H1 (cell line): ENCODE measurements at regions of chr11 and their contacts with region 1.

Region 1: GRCh38 chr11:13343931-13344717 is 66.5 kb downstream of the BMAL1 start:
- DNase-seq: peak in 1 of 2 experiments; percentile 82
- H3K4me3 ChIP-seq: no peak overlapping the region
- H3K27ac ChIP-seq: no peak overlapping the region
- H3K4me1 ChIP-seq: peaks cover 0 to 2% (median 0%) of the 10 kb centered on the region in 4 experiments; a peak in 1 of 7 replicates
- H3K27me3 ChIP-seq: no peaks in the 10 kb centered on the region
- CTCF ChIP-seq: peak; percentile 29 to 85 (median 78)
- EP300 ChIP-seq: no peak
- POLR2A ChIP-seq: no peak
- RAD21 ChIP-seq: peak; percentile 79 to 83

Region 2: DNA sequence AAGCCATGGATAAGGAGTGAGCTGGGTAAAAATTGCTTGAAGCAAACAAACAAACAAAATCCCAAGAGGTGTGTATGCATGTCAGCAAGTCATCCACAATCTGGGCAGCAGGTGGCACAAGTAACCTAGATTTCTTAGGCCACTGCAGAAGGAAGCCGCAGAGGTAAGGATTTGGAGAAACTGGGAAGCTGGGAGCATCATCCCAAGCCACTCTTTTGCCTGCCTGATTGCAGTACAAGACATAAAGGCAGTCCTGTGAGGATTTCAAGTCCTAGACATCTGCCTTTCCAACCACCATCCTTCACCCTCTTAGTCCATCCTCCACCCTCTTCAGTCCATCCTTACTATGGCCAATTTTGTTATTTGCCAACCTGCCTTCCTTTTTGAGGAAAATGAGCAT is 133.7 kb before region 1 on chr11:
- CTCF ChIA-PET with region 1: interaction called, 98 read pairs
- POLR2A ChIA-PET with region 1: interaction called, 4 read pairs
- DNase-seq: peak; percentile 53 to 67
- H3K4me3 ChIP-seq: no peak overlapping the region
- H3K27ac ChIP-seq: no peak overlapping the region
- H3K4me1 ChIP-seq: peaks cover 2 to 10% (median 6%) of the 10 kb centered on the region in 4 experiments; a peak in 6 of 7 replicates
- H3K27me3 ChIP-seq: peaks cover 0 to 1% (median 0%) of the 10 kb centered on the region in 4 experiments; a peak in 1 of 7 replicates
- CTCF ChIP-seq: peak; percentile 29 to 91 (median 87)
- EP300 ChIP-seq: no peak
- POLR2A ChIP-seq: no peak
- RAD21 ChIP-seq: peak; percentile 93 to 97

Region 3: GRCh38 chr11:13229711-13230318 is 114.3 kb before region 1 on chr11:
- CTCF ChIA-PET with region 1: interaction called, 12 read pairs
- POLR2A ChIA-PET with region 1: no interaction called
- DNase-seq: no peak
- H3K4me3 ChIP-seq: no peak overlapping the region
- H3K27ac ChIP-seq: no peak overlapping the region
- H3K4me1 ChIP-seq: no peaks in the 10 kb centered on the region
- H3K27me3 ChIP-seq: no peaks in the 10 kb centered on the region
- CTCF ChIP-seq: no peak
- EP300 ChIP-seq: no peak
- POLR2A ChIP-seq: no peak
- RAD21 ChIP-seq: no peak

Region 4: DNA sequence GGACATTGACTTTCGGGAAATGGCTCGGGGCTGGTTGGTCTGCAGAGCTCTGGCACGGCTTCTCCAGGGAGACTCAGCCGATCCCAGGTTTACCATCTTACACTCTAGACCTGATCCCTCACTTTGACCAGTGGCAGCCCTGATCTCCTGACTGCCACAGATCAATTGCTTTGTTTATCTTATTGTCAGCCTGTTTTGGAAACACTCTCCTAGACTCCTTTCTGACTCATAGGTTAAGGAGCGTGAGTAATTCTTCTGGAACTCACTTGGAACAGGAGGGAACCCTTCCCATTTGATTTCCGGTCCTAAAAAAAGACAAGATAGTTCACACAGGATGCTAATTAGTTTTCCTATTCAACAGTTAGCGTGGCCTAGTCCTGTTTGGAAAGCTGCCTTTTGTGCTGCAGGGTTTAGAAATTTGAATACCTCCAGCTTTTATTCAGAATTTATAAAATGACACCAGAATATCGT is 82.5 kb before region 1 on chr11:
- CTCF ChIA-PET with region 1: interaction called, 14 read pairs
- POLR2A ChIA-PET with region 1: no interaction called
- DNase-seq: no peak
- H3K4me3 ChIP-seq: no peak overlapping the region
- H3K27ac ChIP-seq: no peak overlapping the region
- H3K4me1 ChIP-seq: peaks cover 3 to 17% (median 9%) of the 10 kb centered on the region in 4 experiments
- H3K27me3 ChIP-seq: no peaks in the 10 kb centered on the region
- CTCF ChIP-seq: no peak
- EP300 ChIP-seq: no peak
- POLR2A ChIP-seq: no peak
- RAD21 ChIP-seq: no peak

Region 5: DNA sequence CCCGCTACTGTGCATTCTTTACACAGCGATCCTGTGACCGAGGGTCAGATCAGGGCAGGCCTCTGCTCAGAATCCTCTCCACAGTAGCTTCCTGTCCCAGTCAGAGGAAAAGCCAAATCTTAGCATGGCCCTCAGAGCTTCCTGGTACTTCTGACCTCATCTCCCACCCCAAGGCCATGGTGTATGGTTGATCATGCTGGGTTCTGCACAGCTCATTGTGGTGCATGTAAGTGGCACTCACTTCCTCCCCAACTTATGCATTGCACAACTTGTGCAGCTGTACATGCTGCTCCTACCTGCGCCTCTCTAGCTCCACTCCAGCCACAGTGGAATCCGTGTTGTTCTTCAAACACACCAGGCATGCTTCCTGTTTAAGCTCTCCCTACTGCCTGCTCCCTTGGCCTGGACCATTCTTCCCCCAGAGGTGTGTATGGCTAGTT is 46.2 kb before region 1 on chr11:
- CTCF ChIA-PET with region 1: interaction called, 28 read pairs
- POLR2A ChIA-PET with region 1: no interaction called
- DNase-seq: no peak
- H3K4me3 ChIP-seq: no peak overlapping the region
- H3K27ac ChIP-seq: no peak overlapping the region
- H3K4me1 ChIP-seq: no peaks in the 10 kb centered on the region
- H3K27me3 ChIP-seq: no peaks in the 10 kb centered on the region
- CTCF ChIP-seq: no peak
- EP300 ChIP-seq: no peak
- POLR2A ChIP-seq: no peak
- RAD21 ChIP-seq: no peak

Region 6: GRCh38 chr11:13324709-13325108 is 19.4 kb before region 1 on chr11:
- CTCF ChIA-PET with region 1: interaction called, 10 read pairs
- POLR2A ChIA-PET with region 1: interaction called, 3 read pairs
- DNase-seq: no peak
- H3K4me3 ChIP-seq: no peak overlapping the region
- H3K27ac ChIP-seq: no peak overlapping the region
- H3K4me1 ChIP-seq: peaks cover 0 to 3% (median 1%) of the 10 kb centered on the region in 4 experiments; a peak in 2 of 7 replicates
- H3K27me3 ChIP-seq: no peaks in the 10 kb centered on the region
- CTCF ChIP-seq: no peak
- EP300 ChIP-seq: no peak
- POLR2A ChIP-seq: no peak
- RAD21 ChIP-seq: no peak

Region 7: DNA sequence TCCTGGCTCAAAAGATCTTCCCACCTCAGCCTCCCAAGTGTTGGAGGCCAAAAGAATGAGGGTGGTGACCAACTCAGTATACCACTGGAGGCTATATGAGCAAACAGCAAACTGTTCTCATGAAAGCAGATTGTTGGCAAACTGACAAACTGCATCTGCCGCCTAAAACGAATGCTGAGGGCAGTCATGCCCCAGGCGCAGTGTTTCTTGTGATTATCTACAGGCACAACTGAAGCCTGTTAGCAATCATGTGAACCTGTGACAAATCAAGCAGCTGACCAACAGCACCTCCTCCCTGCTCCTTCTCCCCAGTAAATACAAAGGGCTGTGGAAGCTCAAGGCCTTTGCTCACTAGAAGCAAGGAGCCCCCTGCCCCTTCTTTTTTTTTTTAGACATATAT is 71.1 kb after region 1 on chr11:
- CTCF ChIA-PET with region 1: no interaction called
- POLR2A ChIA-PET with region 1: no interaction called
- DNase-seq: no peak
- H3K4me3 ChIP-seq: no peak overlapping the region
- H3K27ac ChIP-seq: no peak overlapping the region
- H3K4me1 ChIP-seq: no peaks in the 10 kb centered on the region
- H3K27me3 ChIP-seq: no peaks in the 10 kb centered on the region
- CTCF ChIP-seq: no peak
- EP300 ChIP-seq: no peak
- POLR2A ChIP-seq: no peak
- RAD21 ChIP-seq: no peak